Left cardiac atrium (tissue), 4 donors: ENCODE measurements at regions of chr13 and their contacts with region 1.

Region 1: DNA sequence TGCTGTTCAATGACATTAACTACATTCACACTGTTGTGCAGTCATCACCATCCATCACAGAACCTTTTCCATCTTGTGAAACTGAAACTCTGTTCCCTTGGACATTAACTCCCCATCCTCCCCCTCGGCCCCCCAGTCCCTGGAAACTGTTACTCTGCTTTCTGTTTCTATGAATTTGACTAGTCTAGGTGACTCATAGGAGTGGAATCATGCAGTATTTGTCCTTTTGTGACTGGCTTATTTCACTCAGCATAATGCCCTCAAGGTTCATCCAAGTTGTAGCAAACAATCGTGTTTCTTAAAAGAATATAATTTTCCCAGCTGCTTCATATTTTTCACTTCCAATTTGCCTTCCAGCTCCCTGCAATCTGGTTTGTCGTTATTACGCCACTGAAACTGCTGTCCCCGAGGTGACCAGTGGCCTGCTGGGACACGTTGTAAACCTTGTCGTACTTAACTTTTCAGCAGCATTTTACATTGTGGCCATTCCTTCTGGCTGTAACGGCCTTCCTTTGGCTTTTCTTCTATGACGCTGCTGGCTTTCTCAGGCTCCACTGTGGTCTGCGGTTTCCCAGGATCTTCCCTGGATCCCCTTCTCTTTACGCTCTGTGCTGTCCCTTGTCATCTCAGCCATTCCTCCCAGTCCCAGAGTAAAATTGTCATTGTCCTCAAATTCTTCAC is 74.0 kb downstream of the DHRS12 start:
- DNase-seq: peak; percentile 46
- ATAC-seq: peak; percentile 58 to 75

Region 2: GRCh38 chr13:51444922-51445321 is 285.1 kb before region 1 on chr13:
- intact Hi-C with region 1: loop called in 1 of 2 experiments (anchors 10 kb)
- DNase-seq: no peak
- ATAC-seq: no peak

Region 3: DNA sequence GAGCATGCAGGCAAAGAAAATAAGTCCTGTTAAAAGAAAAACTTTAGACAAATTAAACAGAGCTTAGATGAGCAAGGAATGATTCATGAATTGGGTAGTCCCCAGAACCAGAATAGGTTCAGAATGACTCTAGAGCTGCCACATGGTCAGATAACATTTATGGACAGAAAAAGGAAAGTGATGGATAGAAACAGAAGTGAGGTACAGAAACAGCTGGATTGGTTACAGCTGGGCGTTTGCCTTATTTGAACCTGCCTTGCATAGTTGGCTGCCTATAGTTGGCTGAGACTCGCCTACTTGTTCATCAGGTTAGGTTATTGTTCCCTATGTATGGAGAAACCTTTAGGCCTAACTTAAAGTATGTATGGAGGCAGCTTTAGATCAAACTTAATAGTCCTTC is 110.4 kb before region 1 on chr13:
- intact Hi-C with region 1: loop called in 1 of 2 experiments (anchors 10 kb)
- DNase-seq: no peak
- ATAC-seq: peak in 1 of 2 donors; percentile 80